CD4-positive, alpha-beta T cell (primary cell): ENCODE measurements at regions of chr21 and their contacts with region 1.

Region 1: GRCh38 chr21:27787046-27787445 is 820.2 kb upstream of the ADAMTS5 start:
- DNase-seq: no peak
- ATAC-seq: no peak
- H3K4me3 ChIP-seq: no peak overlapping the region
- H3K4me3 Mint-ChIP-seq: no peak overlapping the region
- H3K27ac ChIP-seq: no peak overlapping the region
- H3K27ac Mint-ChIP-seq: no peak overlapping the region
- H3K4me1 ChIP-seq: no peaks in the 10 kb centered on the region
- H3K4me1 Mint-ChIP-seq: no peaks in the 10 kb centered on the region
- H3K27me3 ChIP-seq: no peaks in the 10 kb centered on the region
- H3K27me3 Mint-ChIP-seq: no peaks in the 10 kb centered on the region
- CTCF ChIP-seq: no peak

Region 2: DNA sequence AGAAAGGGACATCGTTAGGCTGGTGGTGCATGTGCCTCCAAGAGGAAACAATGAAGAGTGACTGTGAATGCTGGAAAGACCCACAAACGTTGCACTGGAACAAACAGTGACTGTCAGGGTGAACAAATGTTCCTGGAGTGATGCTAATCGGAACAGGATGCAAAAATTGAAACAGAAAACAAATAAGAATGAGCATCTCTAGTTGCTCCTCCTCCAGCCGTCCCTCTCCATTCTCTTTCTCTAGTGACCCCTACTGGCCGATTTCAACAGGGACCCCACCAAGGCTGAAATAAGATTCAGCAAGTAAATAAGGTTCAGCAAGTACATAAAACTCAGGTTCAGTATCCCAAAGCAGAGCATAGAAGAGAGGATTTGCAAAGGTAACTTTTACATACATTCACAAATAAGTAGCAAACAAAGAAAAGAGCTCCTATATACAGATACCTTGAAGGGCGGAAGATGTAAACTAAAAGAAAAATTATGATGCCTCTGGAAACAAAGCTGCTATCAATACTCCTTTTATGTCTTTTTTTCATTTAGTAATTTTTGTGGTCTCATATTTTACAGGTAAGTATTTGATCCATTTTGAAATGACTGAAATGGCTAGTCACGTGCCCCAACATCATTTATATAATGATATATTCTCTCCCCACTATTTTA is 15.9 kb after region 1 on chr21:
- CTCF ChIA-PET with region 1: no interaction called
- POLR2A ChIA-PET with region 1: no interaction called
- intact Hi-C with region 1: no loop called
- DNase-seq: peak in 3 of 14 experiments; percentile 8 to 18 (median 14)
- ATAC-seq: no peak
- H3K4me3 ChIP-seq: no peak overlapping the region
- H3K4me3 Mint-ChIP-seq: no peak overlapping the region
- H3K27ac ChIP-seq: no peak overlapping the region
- H3K27ac Mint-ChIP-seq: no peak overlapping the region
- H3K4me1 ChIP-seq: no peaks in the 10 kb centered on the region
- H3K4me1 Mint-ChIP-seq: no peaks in the 10 kb centered on the region
- H3K27me3 ChIP-seq: no peaks in the 10 kb centered on the region
- H3K27me3 Mint-ChIP-seq: no peaks in the 10 kb centered on the region
- CTCF ChIP-seq: no peak

Region 3: GRCh38 chr21:27837936-27838335 is 50.9 kb after region 1 on chr21:
- CTCF ChIA-PET with region 1: no interaction called
- POLR2A ChIA-PET with region 1: no interaction called
- intact Hi-C with region 1: loop called in 1 of 2 experiments (anchors 5 kb)
- DNase-seq: no peak
- ATAC-seq: no peak
- H3K4me3 ChIP-seq: no peak overlapping the region
- H3K4me3 Mint-ChIP-seq: no peak overlapping the region
- H3K27ac ChIP-seq: no peak overlapping the region
- H3K27ac Mint-ChIP-seq: no peak overlapping the region
- H3K4me1 ChIP-seq: no peaks in the 10 kb centered on the region
- H3K4me1 Mint-ChIP-seq: no peaks in the 10 kb centered on the region
- H3K27me3 ChIP-seq: no peaks in the 10 kb centered on the region
- H3K27me3 Mint-ChIP-seq: no peaks in the 10 kb centered on the region
- CTCF ChIP-seq: no peak